CD4-positive, alpha-beta T cell (primary cell): ENCODE measurements at regions of chr13 and their contacts with region 1.

Region 1: GRCh38 chr13:37039896-37040295 is 19.6 kb downstream of the SUPT20H start:
- DNase-seq: no peak
- ATAC-seq: no peak
- H3K4me3 ChIP-seq: no peak overlapping the region
- H3K4me3 Mint-ChIP-seq: no peak overlapping the region
- H3K27ac ChIP-seq: no peak overlapping the region
- H3K27ac Mint-ChIP-seq: no peak overlapping the region
- H3K4me1 ChIP-seq: no peaks in the 10 kb centered on the region
- H3K4me1 Mint-ChIP-seq: no peaks in the 10 kb centered on the region
- H3K27me3 ChIP-seq: no peaks in the 10 kb centered on the region
- H3K27me3 Mint-ChIP-seq: no peaks in the 10 kb centered on the region
- CTCF ChIP-seq: no peak

Region 2: GRCh38 chr13:37014609-37015008 is 25.3 kb before region 1 on chr13:
- CTCF ChIA-PET with region 1: no interaction called
- POLR2A ChIA-PET with region 1: no interaction called
- intact Hi-C with region 1: loop called in 1 of 2 experiments (anchors 5 kb)
- DNase-seq: no peak
- ATAC-seq: no peak
- H3K4me3 ChIP-seq: no peak overlapping the region
- H3K4me3 Mint-ChIP-seq: no peak overlapping the region
- H3K27ac ChIP-seq: no peak overlapping the region
- H3K27ac Mint-ChIP-seq: peak overlapping the region; percentile 38
- H3K4me1 ChIP-seq: no peaks in the 10 kb centered on the region
- H3K4me1 Mint-ChIP-seq: peaks cover 6% of the 10 kb centered on the region
- H3K27me3 ChIP-seq: no peaks in the 10 kb centered on the region
- H3K27me3 Mint-ChIP-seq: no peaks in the 10 kb centered on the region
- CTCF ChIP-seq: no peak

Region 3: DNA sequence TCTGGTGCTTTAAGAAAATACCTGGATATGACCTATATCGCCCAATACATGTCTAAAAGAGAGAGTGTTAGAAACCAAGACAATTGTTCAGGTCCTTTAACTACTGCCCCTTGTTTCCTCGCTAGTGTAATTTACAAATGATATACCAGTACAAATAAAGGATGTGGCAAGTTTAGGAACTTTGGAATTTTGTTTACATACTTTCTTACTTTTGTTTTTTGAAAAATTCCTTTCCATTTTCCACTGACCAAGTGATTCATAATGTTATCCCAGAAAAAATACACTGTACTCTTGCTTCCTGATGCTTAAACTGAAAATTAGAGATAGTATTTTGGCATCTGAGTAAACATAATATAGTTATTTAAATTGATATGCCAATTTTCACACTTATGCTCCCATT is 162.4 kb after region 1 on chr13:
- CTCF ChIA-PET with region 1: no interaction called
- POLR2A ChIA-PET with region 1: no interaction called
- intact Hi-C with region 1: no loop called
- DNase-seq: no peak
- ATAC-seq: no peak
- H3K4me3 ChIP-seq: no peak overlapping the region
- H3K4me3 Mint-ChIP-seq: no peak overlapping the region
- H3K27ac ChIP-seq: no peak overlapping the region
- H3K27ac Mint-ChIP-seq: no peak overlapping the region
- H3K4me1 ChIP-seq: no peaks in the 10 kb centered on the region
- H3K4me1 Mint-ChIP-seq: no peaks in the 10 kb centered on the region
- H3K27me3 ChIP-seq: no peaks in the 10 kb centered on the region
- H3K27me3 Mint-ChIP-seq: no peaks in the 10 kb centered on the region
- CTCF ChIP-seq: no peak